Posterior vena cava (tissue), 2 donors: ENCODE measurements at regions of chr6 and their contacts with region 1.

Region 1: DNA sequence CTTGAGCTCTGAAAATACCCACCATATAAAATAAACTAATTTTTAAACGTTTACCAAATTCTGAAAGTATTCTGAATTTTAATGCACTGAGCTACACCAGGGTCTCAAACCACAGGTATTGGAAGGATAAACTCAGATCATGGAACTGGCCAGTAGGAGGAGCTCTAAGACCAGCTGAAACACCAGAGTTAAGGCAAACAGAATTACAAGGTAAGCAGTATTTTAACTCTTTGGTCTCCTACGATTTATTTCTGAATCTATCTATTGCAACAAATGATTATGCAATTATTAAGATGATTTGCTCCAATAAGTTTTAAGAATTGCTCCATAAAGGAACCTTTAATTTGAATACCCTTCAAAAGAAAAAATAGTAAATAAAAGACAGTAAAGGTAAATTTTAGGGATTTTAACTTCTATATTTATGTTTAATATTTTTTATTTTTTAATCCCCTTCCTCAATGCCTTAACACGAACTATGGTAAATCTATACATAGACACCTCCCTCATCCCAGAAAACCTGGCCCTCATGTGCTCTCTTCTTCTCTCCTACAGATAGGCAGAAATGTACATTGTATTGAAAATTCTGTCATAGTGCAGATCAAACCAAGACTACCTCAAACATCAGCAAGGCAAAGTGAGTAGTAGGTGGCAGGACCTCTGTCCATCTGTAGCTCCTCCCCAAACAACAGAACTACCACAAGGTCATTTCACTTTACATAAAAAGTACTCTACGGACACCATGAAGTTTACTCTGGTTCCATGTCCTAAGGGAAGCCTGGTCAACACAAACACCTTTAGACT is 58.4 kb downstream of the SMLR1 start:
- DNase-seq: no peak

Region 2: GRCh38 chr6:131059486-131059885 is 173.9 kb after region 1 on chr6:
- intact Hi-C with region 1: loop called in 1 of 2 experiments (anchors 10 kb)
- DNase-seq: no peak

Region 3: DNA sequence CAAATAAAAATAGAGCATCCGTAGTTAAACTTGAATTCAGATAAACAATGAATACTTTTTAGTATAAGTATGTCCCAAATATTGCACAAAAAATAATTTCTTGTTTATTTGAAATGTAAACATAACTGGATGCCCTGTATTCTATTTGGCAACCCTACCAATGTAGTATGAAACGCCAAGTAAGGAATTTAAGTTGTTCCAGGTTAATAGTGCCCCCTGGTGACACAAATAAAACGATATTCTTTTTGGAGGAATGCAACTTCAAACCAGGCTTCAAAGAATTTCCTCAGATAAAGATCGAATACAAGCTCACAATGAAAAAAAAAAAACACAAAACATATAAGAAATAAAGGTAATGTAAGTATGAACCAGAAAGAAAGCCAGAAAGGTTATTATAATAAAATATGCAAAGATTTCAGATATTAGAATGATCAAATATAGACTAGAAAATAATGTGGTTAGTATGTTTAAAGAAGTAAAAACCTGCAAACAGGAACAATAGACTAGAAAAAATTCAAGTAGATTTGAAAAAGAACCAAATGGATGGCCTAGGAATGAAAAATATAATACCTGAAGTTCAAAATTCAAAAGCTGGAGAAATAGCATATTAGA is 231.3 kb after region 1 on chr6:
- intact Hi-C with region 1: loop called (anchors 2 kb)
- DNase-seq: no peak

Region 4: DNA sequence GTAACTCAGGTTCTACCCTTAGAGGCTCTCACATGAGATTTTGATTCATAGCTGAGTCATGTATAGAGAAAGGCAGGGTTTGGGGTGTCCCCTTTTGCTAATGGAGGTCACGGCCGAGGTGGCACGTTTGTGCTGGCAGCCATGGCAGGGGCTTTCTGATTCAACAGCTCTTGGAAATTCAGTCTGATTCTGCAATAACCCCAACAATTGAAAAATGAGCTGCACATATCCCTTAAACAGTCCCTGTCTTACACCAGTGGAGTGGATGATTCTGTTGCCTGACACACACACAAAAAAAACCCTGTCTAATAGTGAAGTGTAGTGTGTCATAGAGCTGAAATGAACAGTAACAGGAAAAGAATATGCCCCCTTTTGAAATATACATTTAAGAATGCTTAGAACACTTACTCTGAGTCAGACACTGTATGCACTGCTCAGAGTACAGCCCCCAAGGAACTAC is 647.0 kb after region 1 on chr6:
- intact Hi-C with region 1: loop called in 1 of 2 experiments (anchors 5 kb)
- DNase-seq: no peak